ENCODE measurements at regions of chr10 and their contacts with region 1.

Region 1: DNA sequence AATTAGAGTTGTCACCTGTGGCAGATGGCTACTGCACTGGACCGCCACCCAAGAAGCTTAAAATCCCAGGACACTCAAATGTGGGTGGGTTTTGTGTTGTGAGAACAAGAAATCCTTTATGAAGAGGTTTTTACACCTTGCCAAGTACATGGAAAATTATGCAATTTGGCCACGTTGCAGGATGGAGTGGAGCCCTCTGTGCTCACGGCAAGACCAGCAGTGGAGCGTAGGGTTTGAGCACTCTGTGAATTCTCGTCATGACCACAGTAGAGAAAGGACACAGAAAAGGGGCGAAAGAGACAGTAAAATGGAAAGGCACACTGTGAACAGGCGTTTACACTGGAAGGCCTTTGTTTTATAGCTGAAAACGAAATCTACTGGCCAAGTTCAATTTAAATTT is 222.6 kb downstream of the ADARB2 start:
- DNase-seq: no peak

Region 2: DNA sequence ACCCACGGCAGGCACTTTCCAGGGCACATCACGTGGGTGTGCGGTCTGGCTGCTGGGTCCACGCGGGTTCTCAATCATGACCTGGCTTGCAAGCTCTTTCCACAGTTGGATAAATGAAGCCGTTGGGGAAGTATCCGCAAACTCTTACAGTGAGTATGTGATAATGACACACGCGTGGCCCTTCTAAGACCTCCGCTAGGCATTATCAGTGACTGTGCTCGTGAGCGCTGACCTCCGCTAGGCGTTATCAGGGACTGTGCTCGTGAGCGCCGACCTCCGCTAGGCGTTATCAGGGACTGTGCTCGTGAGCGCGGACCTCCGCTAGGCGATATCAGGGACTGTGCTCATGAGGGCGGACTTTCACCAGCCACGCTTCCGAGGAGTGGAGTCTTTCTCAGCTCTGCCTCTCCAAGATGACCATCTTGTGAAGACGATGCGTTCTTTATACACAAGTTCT is 351.4 kb before region 1 on chr10:
- intact Hi-C with region 1: no loop called
- DNase-seq: peak; percentile 68

Region 3: GRCh38 chr10:1454428-1454827 is 60.3 kb before region 1 on chr10:
- intact Hi-C with region 1: no loop called
- DNase-seq: no peak

Region 4: GRCh38 chr10:3090914-3091787 is 1576.5 kb after region 1 on chr10:
- intact Hi-C with region 1: loop called in 1 of 2 experiments (anchors 5 kb)
- DNase-seq: peak; percentile 79